Activated CD4-positive, alpha-beta memory T cell treated with anti-CD3 and anti-CD28 coated beads for 36 hours (primary cell): ENCODE measurements at regions of chr3 and their contacts with region 1.

Region 1: DNA sequence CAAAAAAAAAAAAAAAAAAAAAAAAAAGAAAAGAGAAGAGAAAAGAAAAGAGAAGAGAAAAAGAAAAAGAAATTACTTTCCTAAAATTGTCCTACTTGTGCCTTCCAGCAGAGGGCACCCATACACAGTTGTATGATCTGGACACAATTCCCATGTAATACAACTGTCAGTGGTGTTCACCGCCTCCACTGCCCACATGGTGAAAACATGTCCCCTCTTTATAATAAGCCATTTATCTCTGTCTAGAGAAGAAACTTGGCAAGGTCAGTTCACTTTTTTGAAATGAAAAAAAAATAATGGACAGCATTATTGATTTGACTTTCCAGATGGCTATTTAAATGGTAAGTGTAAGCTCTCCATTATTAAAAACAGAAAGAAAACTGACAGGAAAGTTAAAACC is 459.4 kb downstream of the GBE1 start:
- DNase-seq: peak; percentile 10
- H3K4me3 Mint-ChIP-seq: no peak overlapping the region
- H3K27ac Mint-ChIP-seq: no peak overlapping the region
- H3K4me1 Mint-ChIP-seq: no peaks in the 10 kb centered on the region
- H3K27me3 Mint-ChIP-seq: no peaks in the 10 kb centered on the region

Region 2: DNA sequence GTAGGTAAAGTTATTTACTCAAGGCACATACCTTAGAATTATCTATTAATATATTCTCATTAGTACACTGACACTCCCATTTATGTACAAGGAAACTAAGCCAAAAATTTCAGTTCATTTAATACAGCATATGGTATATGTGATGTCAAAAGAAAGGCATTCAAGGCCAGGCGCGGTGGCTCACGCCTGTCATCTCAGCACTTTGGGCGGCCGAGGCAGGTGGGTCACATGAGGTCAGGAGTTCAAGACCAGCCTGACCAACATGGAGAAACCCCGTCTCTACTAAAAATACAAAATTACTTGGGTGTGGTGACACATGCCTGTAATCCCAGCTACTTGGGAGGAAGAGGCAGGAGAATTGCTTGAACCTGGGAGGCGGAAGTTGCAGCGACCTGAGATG is 24.2 kb after region 1 on chr3:
- CTCF ChIA-PET with region 1: no interaction called
- POLR2A ChIA-PET with region 1: no interaction called
- intact Hi-C with region 1: no loop called
- DNase-seq: no peak
- H3K4me3 Mint-ChIP-seq: no peak overlapping the region
- H3K27ac Mint-ChIP-seq: no peak overlapping the region
- H3K4me1 Mint-ChIP-seq: no peaks in the 10 kb centered on the region
- H3K27me3 Mint-ChIP-seq: no peaks in the 10 kb centered on the region

Region 3: GRCh38 chr3:81338676-81339555 is 36.9 kb after region 1 on chr3:
- CTCF ChIA-PET with region 1: interaction called, 4 read pairs
- POLR2A ChIA-PET with region 1: no interaction called
- intact Hi-C with region 1: loop called (anchors 1 kb)
- DNase-seq: no peak
- H3K4me3 Mint-ChIP-seq: no peak overlapping the region
- H3K27ac Mint-ChIP-seq: no peak overlapping the region
- H3K4me1 Mint-ChIP-seq: no peaks in the 10 kb centered on the region
- H3K27me3 Mint-ChIP-seq: no peaks in the 10 kb centered on the region

Region 4: GRCh38 chr3:81723732-81724313 is 421.8 kb after region 1 on chr3:
- CTCF ChIA-PET with region 1: no interaction called
- POLR2A ChIA-PET with region 1: no interaction called
- intact Hi-C with region 1: no loop called
- DNase-seq: no peak
- H3K4me3 Mint-ChIP-seq: no peak overlapping the region
- H3K27ac Mint-ChIP-seq: no peak overlapping the region
- H3K4me1 Mint-ChIP-seq: no peaks in the 10 kb centered on the region
- H3K27me3 Mint-ChIP-seq: no peaks in the 10 kb centered on the region

Region 5: DNA sequence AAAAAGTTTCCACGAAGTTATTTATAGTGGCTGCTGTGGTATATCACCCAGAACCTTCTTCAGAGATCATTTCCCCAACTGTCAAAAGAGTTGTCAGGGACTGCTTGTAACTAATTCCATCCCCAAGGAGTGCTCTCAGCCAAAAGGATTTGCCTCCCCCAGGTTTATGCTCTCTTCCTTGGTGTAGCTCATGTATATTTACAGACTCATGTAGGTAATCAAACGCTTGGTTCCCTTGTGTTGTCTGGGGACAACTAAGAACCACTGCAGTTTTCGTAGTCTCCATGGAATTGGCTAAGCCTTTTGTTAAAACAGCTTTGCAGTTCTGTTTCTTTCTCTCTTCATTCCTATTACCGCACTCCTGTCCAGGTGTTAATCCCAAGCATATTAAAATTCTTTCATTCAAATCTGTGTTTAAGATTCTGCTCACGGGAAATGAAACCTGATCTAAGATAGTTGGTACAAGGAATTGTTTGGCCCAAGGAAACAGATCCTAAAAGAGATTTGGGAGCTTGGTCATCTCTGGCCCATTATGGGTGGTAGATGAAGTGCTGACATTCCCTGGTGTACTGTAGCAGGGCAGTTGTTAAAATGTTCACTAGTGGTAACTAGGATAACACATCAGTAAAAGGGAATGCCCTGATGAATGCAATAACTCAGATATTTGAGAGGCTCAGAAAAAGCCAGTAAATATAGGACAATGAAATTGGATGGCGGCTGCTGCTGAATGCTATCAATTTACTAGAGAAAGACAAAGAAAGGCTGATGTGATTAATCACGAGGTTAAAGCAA is 820.7 kb after region 1 on chr3:
- CTCF ChIA-PET with region 1: no interaction called
- POLR2A ChIA-PET with region 1: no interaction called
- intact Hi-C with region 1: no loop called
- DNase-seq: no peak
- H3K4me3 Mint-ChIP-seq: no peak overlapping the region
- H3K27ac Mint-ChIP-seq: no peak overlapping the region
- H3K4me1 Mint-ChIP-seq: no peaks in the 10 kb centered on the region
- H3K27me3 Mint-ChIP-seq: no peaks in the 10 kb centered on the region

Region 6: DNA sequence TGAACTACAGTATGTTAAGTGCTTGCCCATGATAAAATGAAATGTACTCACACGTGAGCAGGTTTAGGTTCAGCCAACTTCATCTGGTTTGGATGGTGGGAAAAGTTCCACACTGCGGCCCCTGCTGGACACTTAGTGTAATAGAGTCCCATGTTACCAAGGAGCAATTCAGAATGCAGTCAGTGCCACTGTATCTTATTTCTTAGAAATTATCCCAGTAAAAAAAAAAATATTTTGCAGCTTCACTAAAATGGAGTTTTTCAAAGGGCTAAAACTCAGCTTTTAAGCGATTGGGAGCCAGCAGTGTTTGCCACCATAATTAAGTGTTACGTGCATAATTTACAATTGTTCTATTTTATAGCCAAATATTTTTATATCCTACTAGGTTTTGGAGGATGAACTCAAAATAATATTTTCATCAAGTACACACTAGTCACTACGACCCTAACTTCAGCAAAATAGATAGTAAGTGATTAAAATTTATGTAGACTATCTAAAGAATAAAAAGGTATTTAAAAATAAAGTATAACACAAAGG is 831.1 kb after region 1 on chr3:
- CTCF ChIA-PET with region 1: no interaction called
- POLR2A ChIA-PET with region 1: no interaction called
- intact Hi-C with region 1: loop called (anchors 2 kb)
- DNase-seq: peak; percentile 54
- H3K4me3 Mint-ChIP-seq: no peak overlapping the region
- H3K27ac Mint-ChIP-seq: no peak overlapping the region
- H3K4me1 Mint-ChIP-seq: no peaks in the 10 kb centered on the region
- H3K27me3 Mint-ChIP-seq: no peaks in the 10 kb centered on the region